ENCODE measurements at regions of chr15 and their contacts with region 1.

Region 1: DNA sequence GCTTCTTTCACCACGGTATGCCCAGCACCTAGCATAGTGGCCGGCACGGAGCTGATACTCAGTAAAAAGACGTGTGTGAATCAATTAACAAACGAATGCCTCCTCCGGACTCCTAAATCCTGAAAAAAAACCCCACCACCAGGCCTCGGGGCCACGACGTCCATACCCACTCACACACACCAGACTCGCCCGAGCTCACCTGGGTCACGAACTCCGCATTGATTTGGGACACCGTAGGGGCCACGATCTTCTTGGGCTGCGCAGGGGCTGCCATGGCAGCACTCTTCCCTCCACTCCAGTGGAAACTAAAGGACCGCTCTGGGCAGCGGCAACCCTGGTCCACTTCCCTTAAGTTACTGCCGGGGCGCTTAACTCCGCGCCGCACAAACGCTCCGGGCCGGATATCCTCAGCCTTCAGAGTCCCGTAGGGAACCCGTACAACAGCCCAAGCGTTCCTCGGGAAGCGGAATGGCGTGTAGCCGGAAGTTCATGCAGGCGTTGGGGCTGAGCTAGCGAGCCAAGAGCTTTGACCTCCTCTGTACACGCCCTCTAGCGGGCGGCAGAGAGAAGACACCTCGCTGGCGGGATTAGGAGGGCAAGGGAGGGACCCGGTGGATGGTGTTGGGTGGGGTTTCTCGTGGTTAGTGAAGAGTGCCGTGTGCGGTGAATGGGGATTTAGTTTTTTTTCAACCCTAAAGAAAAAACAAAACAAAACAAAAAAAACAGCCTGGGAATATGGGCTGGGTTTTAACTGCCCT is at the start of gene AQR:
- DNase-seq: peak; percentile 98
- H3K4me3 ChIP-seq: peak within 1 kb of the TSS; percentile 73 to 89 (median 79)
- H3K27ac ChIP-seq: peak within 1 kb of the TSS; percentile 80 to 87 (median 83)
- H3K4me1 ChIP-seq: peaks cover 0 to 29% (median 22%) of the 10 kb centered on the region in 4 donors
- H3K27me3 ChIP-seq: no peaks in the 10 kb centered on the region
- CTCF ChIP-seq: peak; percentile 76 to 86 (median 82)
- EP300 ChIP-seq: no peak
- POLR2A ChIP-seq: peak; percentile 61 to 62
- total RNA-seq, gene AQR: 17.4 to 24.2 (median 21.6) TPM

Region 2: GRCh38 chr15:34795267-34796081 is 174.0 kb before region 1 on chr15 and contains the start of gene ACTC1:
- intact Hi-C with region 1: no loop called
- DNase-seq: peak; percentile 72
- H3K4me3 ChIP-seq: peak within 1 kb of the TSS in 3 of 4 donors; percentile 29 to 38 (median 34)
- H3K27ac ChIP-seq: peak within 1 kb of the TSS in 2 of 4 donors; percentile 14 to 43
- H3K4me1 ChIP-seq: peaks cover 0 to 21% (median 13%) of the 10 kb centered on the region in 4 donors
- H3K27me3 ChIP-seq: peaks cover 0 to 18% (median 0%) of the 10 kb centered on the region in 3 donors
- CTCF ChIP-seq: no peak
- EP300 ChIP-seq: no peak
- POLR2A ChIP-seq: no peak
- total RNA-seq, gene ACTC1: 0.36 to 3.6 (median 0.93) TPM

Region 3: DNA sequence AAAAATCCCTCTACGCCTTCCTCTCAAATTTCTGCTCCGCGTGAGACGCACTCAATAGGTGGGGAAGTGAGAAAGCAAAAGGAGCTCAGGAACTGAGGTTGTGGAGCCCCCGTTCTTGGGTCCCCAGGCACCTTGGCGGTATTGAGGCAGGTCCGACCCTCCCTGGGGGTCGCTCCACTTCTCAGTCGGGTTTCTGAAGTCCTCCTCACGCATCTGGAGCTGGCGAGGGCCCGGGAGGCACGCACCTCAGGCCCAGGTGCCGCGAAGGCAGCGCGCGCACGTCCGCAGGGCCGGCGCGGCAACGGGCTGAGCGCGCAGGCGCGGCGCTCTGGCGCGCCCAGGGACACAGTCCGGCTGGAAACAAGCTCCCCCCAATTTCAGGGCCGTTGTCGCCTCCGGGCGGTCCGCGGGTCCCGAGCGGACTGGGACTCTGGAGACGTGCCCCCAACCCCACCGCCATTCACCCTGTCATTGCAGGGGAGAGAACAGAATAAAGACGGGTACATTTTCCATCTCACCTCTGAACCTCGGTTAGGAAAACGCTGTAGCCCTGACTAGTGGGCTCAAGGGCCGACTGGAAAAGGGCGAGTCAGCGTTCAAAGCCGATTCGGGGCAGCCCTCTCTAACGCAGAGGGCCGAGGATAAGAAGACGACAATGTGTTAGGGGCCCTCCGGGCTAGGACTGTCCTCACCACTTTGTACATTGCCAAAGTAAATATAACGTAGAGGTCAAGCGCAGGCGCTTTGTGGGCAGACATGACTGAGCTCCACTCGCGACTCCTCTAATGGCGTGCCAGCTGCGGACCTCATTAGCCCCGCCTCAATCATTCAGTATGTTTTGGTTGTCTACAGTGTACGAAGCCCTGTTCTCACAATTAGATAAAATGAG is 18.7 kb after region 1 on chr15 and contains the start of gene ZNF770:
- intact Hi-C with region 1: loop called (anchors 1 kb)
- DNase-seq: peak; percentile 87
- H3K4me3 ChIP-seq: peak within 1 kb of the TSS; percentile 71 to 82 (median 74)
- H3K27ac ChIP-seq: peak within 1 kb of the TSS; percentile 91 to 95 (median 93)
- H3K4me1 ChIP-seq: peaks cover 0 to 36% (median 30%) of the 10 kb centered on the region in 4 donors
- H3K27me3 ChIP-seq: no peaks in the 10 kb centered on the region
- CTCF ChIP-seq: no peak
- EP300 ChIP-seq: no peak
- POLR2A ChIP-seq: peak; percentile 37 to 41
- total RNA-seq, gene ZNF770: 15.9 to 21.4 (median 19.1) TPM